ENCODE measurements at regions of chr1 and their contacts with region 1.

Region 1: GRCh38 chr1:23422241-23423030 is 2.1 kb downstream of the TCEA3 start:
- DNase-seq: peak; percentile 41 to 65 (median 54)
- H3K4me3 ChIP-seq: no peak overlapping the region
- H3K4me3 Mint-ChIP-seq: peak overlapping the region; percentile 79 to 91 (median 87)
- H3K27ac ChIP-seq: peak overlapping the region; percentile 1
- H3K27ac Mint-ChIP-seq: peak overlapping the region; percentile 11 to 92 (median 79)
- H3K4me1 ChIP-seq: peaks cover 33% of the 10 kb centered on the region
- H3K4me1 Mint-ChIP-seq: peaks cover 25 to 35% (median 30%) of the 10 kb centered on the region in 4 donors
- H3K27me3 ChIP-seq: no peaks in the 10 kb centered on the region
- H3K27me3 Mint-ChIP-seq: peaks cover 0 to 2% of the 10 kb centered on the region in 2 donors

Region 2: DNA sequence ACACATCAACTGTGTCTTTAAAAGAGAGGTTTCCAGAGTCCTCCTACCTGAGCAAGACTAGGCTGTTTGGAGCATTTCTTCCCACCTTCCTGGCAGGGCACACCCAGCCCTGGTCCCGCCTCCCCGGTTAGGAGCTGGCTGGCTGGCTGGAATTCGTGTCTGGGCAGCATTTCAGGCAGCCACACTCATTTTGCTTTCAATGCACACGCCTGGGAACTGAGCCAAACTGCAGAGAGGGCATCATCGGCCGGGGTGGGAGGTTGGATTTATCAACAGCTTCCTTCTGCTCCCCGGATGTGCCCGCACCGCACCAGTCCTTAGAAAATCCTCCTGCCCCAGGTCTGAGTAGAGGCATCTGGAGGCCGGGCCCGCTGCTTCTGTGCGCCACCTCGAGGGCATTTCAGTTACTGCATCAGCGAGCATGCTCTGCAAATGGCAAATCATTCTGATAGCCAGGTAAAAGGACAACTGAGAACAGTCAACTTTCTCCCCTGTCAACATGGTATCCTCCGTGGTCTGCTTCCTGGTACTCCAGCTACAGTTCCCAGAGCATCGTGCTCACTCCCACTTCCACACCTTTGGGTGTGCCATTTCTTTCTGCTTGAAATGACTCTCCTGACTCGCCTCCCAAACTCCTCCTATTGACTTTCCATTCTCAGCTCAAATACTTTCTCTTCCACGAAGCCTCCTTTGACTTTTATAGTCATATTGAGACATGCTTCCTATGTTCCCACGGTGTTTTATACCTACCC is 18.5 kb before region 1 on chr1:
- CTCF ChIA-PET with region 1: interaction called, 15 read pairs
- POLR2A ChIA-PET with region 1: interaction called, 5 read pairs
- intact Hi-C with region 1: no loop called
- DNase-seq: peak; percentile 69 to 76 (median 74)
- H3K4me3 ChIP-seq: no peak overlapping the region
- H3K4me3 Mint-ChIP-seq: no peak overlapping the region
- H3K27ac ChIP-seq: no peak overlapping the region
- H3K27ac Mint-ChIP-seq: peak overlapping the region in 2 of 7 donors; percentile 14 to 22
- H3K4me1 ChIP-seq: peaks cover 11% of the 10 kb centered on the region
- H3K4me1 Mint-ChIP-seq: peaks cover 5 to 12% (median 9%) of the 10 kb centered on the region in 4 donors
- H3K27me3 ChIP-seq: no peaks in the 10 kb centered on the region
- H3K27me3 Mint-ChIP-seq: no peaks in the 10 kb centered on the region

Region 3: DNA sequence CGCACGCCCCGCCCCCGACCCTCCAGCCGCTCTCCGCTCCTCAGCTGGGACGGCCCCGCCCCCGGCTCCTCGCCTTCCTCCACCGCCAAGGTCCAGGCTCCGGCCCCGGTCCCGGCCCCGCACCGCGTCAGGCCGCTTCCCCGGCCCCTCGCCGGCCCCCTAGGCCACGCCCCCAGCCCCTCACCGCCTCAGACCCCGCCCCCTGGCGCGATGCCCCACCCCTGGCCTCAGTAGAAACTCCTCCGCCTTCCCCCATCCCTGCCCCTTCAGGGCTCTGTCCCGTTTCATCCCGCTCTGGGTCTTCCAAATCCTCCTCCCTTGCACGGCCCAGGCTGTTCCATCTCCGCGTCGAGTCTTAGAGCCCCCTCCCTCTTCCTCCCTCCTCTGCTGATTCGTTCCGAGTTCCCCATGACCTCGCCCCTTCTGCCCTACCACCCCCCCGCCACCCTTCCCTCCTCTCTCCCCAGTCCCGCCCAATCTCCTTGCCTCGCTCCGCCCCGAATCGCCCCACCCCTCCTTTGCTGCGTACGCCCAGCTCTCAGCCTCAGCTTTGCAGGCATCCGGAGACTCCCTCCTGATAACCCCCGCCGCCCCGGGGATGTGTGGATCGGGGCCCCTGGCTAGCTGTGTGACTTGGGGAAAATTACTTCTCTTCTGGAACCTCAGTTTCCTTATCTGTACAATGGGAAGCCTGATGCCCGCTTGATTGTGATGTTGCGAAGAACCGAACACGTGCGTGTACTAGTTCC is 62.0 kb after region 1 on chr1:
- CTCF ChIA-PET with region 1: no interaction called
- POLR2A ChIA-PET with region 1: interaction called, 5 read pairs
- intact Hi-C with region 1: loop called (anchors 2 kb)
- DNase-seq: peak; percentile 88 to 95 (median 92)
- H3K4me3 ChIP-seq: peak overlapping the region in 1 of 2 donors; percentile 64
- H3K4me3 Mint-ChIP-seq: peak overlapping the region; percentile 87 to 94 (median 89)
- H3K27ac ChIP-seq: peak overlapping the region; percentile 6
- H3K27ac Mint-ChIP-seq: peak overlapping the region in 6 of 7 donors; percentile 79 to 95 (median 88)
- H3K4me1 ChIP-seq: peaks cover 15% of the 10 kb centered on the region
- H3K4me1 Mint-ChIP-seq: peaks cover 11 to 20% (median 16%) of the 10 kb centered on the region in 4 donors
- H3K27me3 ChIP-seq: no peaks in the 10 kb centered on the region
- H3K27me3 Mint-ChIP-seq: peaks cover 3 to 6% of the 10 kb centered on the region in 2 donors